A673 (cell line): ENCODE measurements at regions of chr6 and their contacts with region 1.

Region 1: GRCh38 chr6:30357678-30358540 is 13.0 kb downstream of the RPP21 start:
- DNase-seq: peak; percentile 84
- H3K4me3 ChIP-seq: peak overlapping the region; percentile 47
- H3K27ac ChIP-seq: no peak overlapping the region
- H3K4me1 ChIP-seq: peaks cover 6% of the 10 kb centered on the region
- H3K27me3 ChIP-seq: peaks cover 50% of the 10 kb centered on the region
- CTCF ChIP-seq: peak; percentile 86

Region 2: GRCh38 chr6:29953001-29953441 is 404.9 kb before region 1 on chr6:
- CTCF ChIA-PET with region 1: no interaction called
- POLR2A ChIA-PET with region 1: no interaction called
- intact Hi-C with region 1: no loop called
- DNase-seq: no peak
- H3K4me3 ChIP-seq: no peak overlapping the region
- H3K27ac ChIP-seq: no peak overlapping the region
- H3K4me1 ChIP-seq: no peaks in the 10 kb centered on the region
- H3K27me3 ChIP-seq: no peaks in the 10 kb centered on the region
- CTCF ChIP-seq: no peak

Region 3: DNA sequence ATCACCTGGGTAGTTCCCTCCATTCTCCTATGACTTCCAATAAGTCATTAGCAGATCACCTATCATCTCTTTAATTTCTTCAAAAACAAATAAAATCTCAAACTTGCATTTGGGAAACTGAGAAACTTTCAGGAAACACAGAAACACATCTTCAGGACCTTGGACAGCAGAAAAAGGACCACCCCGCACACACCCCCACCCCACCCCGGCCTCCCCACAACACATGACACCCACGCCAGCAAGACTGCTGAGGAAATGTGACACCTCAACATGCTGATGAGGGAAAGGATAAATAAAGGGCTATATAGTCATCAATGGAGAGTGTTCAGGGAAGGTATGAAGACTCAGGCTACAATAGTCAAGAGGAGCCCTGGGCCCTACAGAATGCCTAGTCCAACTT is 46.8 kb before region 1 on chr6:
- CTCF ChIA-PET with region 1: no interaction called
- POLR2A ChIA-PET with region 1: no interaction called
- intact Hi-C with region 1: no loop called
- DNase-seq: no peak
- H3K4me3 ChIP-seq: no peak overlapping the region
- H3K27ac ChIP-seq: no peak overlapping the region
- H3K4me1 ChIP-seq: no peaks in the 10 kb centered on the region
- H3K27me3 ChIP-seq: no peaks in the 10 kb centered on the region
- CTCF ChIP-seq: no peak

Region 4: GRCh38 chr6:30418448-30418847 is 60.5 kb after region 1 on chr6:
- CTCF ChIA-PET with region 1: no interaction called
- POLR2A ChIA-PET with region 1: interaction called, 12 read pairs
- intact Hi-C with region 1: no loop called
- DNase-seq: no peak
- H3K4me3 ChIP-seq: no peak overlapping the region
- H3K27ac ChIP-seq: no peak overlapping the region
- H3K4me1 ChIP-seq: no peaks in the 10 kb centered on the region
- H3K27me3 ChIP-seq: peaks cover 80% of the 10 kb centered on the region
- CTCF ChIP-seq: no peak

Region 5: GRCh38 chr6:30447237-30447636 is 89.3 kb after region 1 on chr6:
- CTCF ChIA-PET with region 1: no interaction called
- POLR2A ChIA-PET with region 1: no interaction called
- intact Hi-C with region 1: loop called (anchors 10 kb)
- DNase-seq: peak; percentile 65
- H3K4me3 ChIP-seq: no peak overlapping the region
- H3K27ac ChIP-seq: no peak overlapping the region
- H3K4me1 ChIP-seq: no peaks in the 10 kb centered on the region
- H3K27me3 ChIP-seq: peaks cover 96% of the 10 kb centered on the region
- CTCF ChIP-seq: peak; percentile 53